ENCODE measurements at regions of chr1 and their contacts with region 1.

Region 1: DNA sequence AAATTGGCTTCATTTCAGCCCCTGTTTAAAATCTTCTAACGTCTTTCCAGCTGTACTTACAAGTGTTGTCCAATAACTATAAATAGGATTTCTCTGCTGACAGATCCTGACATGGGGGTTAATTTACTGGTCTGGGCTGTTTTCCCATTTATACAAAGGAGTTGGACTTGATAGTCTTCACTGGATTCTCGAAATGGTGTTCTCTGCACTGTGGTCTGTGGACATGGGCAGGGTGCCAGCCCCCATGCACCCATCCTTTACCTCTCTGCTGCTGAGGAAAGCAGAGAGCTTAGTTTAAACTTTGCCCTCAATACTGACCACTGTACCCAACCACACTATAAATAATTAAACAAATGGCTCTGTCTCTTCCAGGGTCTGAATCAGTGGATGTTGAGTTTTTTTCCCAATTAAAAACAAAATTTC is 5.2 kb downstream of the DIO1 start:
- DNase-seq: no peak
- CTCF ChIP-seq: no peak

Region 2: DNA sequence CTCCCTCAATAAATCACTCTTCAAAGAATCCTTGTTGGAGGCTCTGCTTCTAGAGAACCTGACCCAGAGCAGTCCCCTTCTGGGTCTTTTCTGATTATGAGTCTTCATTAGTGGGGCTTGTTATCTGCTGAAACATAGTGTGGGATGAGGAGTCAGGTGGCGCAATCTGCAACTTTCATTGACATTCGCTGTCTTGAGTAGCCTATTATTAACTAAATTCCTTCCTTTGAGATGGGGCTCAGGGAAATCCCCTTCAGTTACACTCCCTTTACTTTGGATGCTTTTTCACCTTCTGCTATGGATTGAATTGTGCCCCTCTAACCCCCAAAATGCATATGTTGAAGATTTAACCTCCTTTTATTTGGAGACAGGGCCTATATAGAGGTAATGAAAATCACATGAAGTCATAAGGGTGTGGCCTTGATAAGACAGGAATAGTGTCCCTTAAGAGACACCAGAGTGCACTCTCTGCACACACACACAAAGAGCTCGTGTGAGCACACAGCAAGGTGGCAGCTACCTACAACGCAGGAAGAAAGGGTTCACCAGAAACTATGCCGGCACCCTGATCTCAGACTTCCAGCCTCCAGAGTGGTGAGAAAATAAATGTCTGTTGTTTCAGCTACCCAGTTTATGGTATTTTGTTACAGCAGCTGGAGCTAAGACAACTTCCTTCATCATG is 14.3 kb after region 1 on chr1:
- CTCF ChIA-PET with region 1: interaction called, 21 read pairs
- POLR2A ChIA-PET with region 1: no interaction called
- DNase-seq: no peak
- CTCF ChIP-seq: no peak

Region 3: DNA sequence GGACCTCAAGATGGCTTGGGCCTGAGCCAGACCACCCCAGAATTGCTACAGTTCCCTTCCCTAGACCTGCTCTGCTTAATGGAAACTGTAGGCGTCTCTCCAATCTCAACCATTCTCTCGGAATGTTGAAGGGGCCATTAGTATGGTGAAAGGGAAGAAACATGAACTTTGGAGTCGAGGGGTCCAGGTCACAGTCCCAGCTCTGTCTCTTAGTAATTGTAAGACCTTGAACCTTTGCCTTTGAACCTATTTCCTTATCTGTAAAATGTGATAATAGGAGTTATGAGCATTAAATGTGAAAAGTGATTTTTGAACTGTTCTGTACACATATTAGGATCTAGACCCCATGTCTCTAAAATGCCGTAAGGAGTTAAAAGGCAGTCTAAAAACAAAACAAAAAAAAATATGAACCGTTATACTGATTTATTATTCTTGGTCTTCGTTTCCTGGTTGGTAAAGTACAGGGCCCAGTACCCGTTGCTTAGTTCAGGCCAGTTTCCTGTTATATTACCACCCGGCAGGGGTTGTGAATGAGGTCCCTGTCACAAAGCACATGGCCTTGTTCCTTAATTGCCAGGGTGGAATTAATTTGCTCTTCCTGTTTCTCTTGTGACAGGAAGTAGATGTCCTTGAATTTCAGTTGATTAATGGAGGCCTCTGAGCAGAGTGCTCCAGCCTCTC is 196.5 kb after region 1 on chr1:
- CTCF ChIA-PET with region 1: no interaction called
- POLR2A ChIA-PET with region 1: no interaction called
- DNase-seq: no peak
- CTCF ChIP-seq: no peak

Region 4: GRCh38 chr1:54180701-54181360 is 281.6 kb after region 1 on chr1:
- CTCF ChIA-PET with region 1: no interaction called
- POLR2A ChIA-PET with region 1: no interaction called
- DNase-seq: no peak
- CTCF ChIP-seq: no peak

Region 5: GRCh38 chr1:54474639-54475251 is 575.5 kb after region 1 on chr1:
- CTCF ChIA-PET with region 1: no interaction called
- POLR2A ChIA-PET with region 1: no interaction called
- DNase-seq: no peak
- CTCF ChIP-seq: no peak